ENCODE measurements at regions of chr11 and their contacts with region 1.

Region 1: DNA sequence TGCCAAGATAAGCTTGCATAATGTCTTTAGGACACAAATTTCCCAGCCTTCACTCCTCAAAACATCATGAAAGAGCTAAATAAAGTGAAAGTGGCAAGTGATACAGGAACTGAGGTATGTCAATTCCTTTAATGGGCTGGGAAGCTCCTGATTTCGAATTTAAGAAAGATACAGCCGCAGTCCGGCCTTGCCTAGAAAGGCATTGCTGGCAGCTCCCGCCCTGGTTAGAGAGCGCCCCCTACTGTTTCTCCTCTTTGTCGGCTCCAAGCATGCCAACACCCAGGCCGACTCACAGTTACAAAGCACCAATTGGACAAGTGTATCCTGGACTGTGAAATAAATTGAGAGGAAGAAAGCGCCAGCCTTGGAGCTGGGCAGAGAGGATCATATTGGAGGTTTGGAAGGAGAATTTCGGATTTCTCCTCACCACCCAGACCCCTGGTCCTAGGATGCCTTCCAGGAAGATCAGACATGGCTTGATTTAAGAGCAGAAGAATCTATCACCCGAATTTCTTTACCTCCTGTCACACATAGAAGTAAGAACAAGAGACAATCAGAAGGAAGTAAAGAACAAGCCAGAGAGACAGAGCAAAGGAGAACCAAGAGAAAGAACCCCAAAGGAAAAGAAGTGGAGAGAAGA is 84.0 kb downstream of the FAM76B start:
- DNase-seq: peak; percentile 67 to 91 (median 86)
- ATAC-seq: peak; percentile 98
- H3K4me3 ChIP-seq: no peak overlapping the region
- H3K4me3 Mint-ChIP-seq: no peak overlapping the region
- H3K27ac ChIP-seq: peak overlapping the region; percentile 55
- H3K27ac Mint-ChIP-seq: no peak overlapping the region
- H3K4me1 ChIP-seq: peaks cover 29 to 43% of the 10 kb centered on the region in 2 donors
- H3K4me1 Mint-ChIP-seq: peaks cover 3 to 15% (median 11%) of the 10 kb centered on the region in 7 donors
- H3K27me3 ChIP-seq: no peaks in the 10 kb centered on the region
- H3K27me3 Mint-ChIP-seq: peaks cover 0 to 3% (median 0%) of the 10 kb centered on the region in 5 donors

Region 2: GRCh38 chr11:95296621-95297025 is 409.0 kb before region 1 on chr11:
- CTCF ChIA-PET with region 1: interaction called, 3 read pairs
- POLR2A ChIA-PET with region 1: interaction called, 3 read pairs
- intact Hi-C with region 1: loop called in 1 of 2 experiments (anchors 2 kb)
- DNase-seq: no peak
- ATAC-seq: peak; percentile 78
- H3K4me3 ChIP-seq: no peak overlapping the region
- H3K4me3 Mint-ChIP-seq: peak overlapping the region in 1 of 10 donors; percentile 5
- H3K27ac ChIP-seq: no peak overlapping the region
- H3K27ac Mint-ChIP-seq: no peak overlapping the region
- H3K4me1 ChIP-seq: peaks cover 0 to 27% of the 10 kb centered on the region in 2 donors
- H3K4me1 Mint-ChIP-seq: peaks cover 26 to 47% (median 32%) of the 10 kb centered on the region in 7 donors
- H3K27me3 ChIP-seq: no peaks in the 10 kb centered on the region
- H3K27me3 Mint-ChIP-seq: peaks cover 0 to 4% (median 0%) of the 10 kb centered on the region in 5 donors

Region 3: GRCh38 chr11:95398437-95399112 is 307.0 kb before region 1 on chr11:
- CTCF ChIA-PET with region 1: interaction called, 3 read pairs
- POLR2A ChIA-PET with region 1: no interaction called
- intact Hi-C with region 1: loop called in 1 of 2 experiments (anchors 10 kb)
- DNase-seq: no peak
- ATAC-seq: no peak
- H3K4me3 ChIP-seq: no peak overlapping the region
- H3K4me3 Mint-ChIP-seq: no peak overlapping the region
- H3K27ac ChIP-seq: no peak overlapping the region
- H3K27ac Mint-ChIP-seq: no peak overlapping the region
- H3K4me1 ChIP-seq: no peaks in the 10 kb centered on the region
- H3K4me1 Mint-ChIP-seq: peaks cover 0 to 5% (median 4%) of the 10 kb centered on the region in 7 donors
- H3K27me3 ChIP-seq: no peaks in the 10 kb centered on the region
- H3K27me3 Mint-ChIP-seq: peaks cover 0 to 3% (median 0%) of the 10 kb centered on the region in 5 donors

Region 4: DNA sequence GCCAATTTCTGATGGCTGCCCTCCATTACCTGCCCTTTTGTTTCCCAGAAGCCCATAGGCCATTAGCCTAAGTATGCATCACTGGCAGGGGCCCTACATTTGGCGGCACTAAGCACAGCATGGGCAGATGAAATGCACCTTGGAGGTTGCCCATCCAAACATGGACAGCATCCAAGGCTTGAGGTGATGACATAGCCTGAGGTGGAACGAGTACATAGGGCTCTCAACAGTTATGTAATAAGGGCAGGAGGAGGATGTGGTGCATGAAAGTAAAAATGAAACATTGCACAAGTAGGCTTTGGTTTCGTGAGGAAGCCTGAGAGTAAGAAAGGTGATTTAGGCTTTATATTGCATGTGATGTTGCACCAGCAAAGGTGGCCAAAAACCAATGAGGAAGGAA is 64.1 kb before region 1 on chr11:
- CTCF ChIA-PET with region 1: interaction called, 10 read pairs
- POLR2A ChIA-PET with region 1: interaction called, 5 read pairs
- intact Hi-C with region 1: loop called in 1 of 2 experiments (anchors 1 kb)
- DNase-seq: peak in 8 of 9 donors; percentile 31 to 73 (median 58)
- ATAC-seq: peak; percentile 85
- H3K4me3 ChIP-seq: no peak overlapping the region
- H3K4me3 Mint-ChIP-seq: peak overlapping the region in 9 of 10 donors; percentile 30 to 76 (median 71)
- H3K27ac ChIP-seq: peak overlapping the region; percentile 54
- H3K27ac Mint-ChIP-seq: peak overlapping the region; percentile 83 to 97 (median 92)
- H3K4me1 ChIP-seq: peaks cover 0 to 21% of the 10 kb centered on the region in 2 donors
- H3K4me1 Mint-ChIP-seq: peaks cover 12 to 29% (median 21%) of the 10 kb centered on the region in 7 donors
- H3K27me3 ChIP-seq: no peaks in the 10 kb centered on the region
- H3K27me3 Mint-ChIP-seq: no peaks in the 10 kb centered on the region

Region 5: DNA sequence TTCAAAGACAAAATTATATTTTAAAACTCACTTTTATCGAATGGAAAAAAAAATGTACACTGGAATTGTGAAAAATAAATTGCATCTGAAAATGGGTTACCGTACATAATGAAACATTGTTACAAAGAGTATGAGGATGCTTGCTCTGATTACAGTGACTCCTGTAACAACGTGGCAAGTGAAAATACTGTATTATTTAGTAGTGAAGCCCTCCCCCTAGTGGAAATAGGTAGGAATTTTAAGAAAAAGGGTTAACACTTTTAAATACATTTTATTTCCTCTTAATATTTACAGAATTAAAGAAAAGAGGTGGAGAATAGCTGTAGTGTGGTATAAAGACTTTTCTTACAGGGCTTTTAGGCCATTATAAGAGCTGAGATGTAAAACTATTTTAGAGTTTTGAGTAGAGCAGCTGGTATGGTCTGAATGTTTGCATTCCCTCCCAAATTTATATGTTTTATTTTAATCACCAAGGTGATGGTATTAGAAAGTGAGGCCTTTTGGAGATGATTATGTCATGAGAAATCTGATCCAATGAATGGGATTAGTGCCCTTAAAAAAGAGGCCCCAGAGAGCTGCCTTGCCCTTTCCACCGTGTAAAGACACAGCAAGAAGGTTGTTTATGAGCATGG is 58.8 kb after region 1 on chr11:
- CTCF ChIA-PET with region 1: interaction called, 12 read pairs
- POLR2A ChIA-PET with region 1: no interaction called
- intact Hi-C with region 1: loop called (anchors 1 kb)
- DNase-seq: peak in 7 of 9 donors; percentile 43 to 73 (median 68)
- ATAC-seq: peak; percentile 95
- H3K4me3 ChIP-seq: no peak overlapping the region
- H3K4me3 Mint-ChIP-seq: no peak overlapping the region
- H3K27ac ChIP-seq: no peak overlapping the region
- H3K27ac Mint-ChIP-seq: no peak overlapping the region
- H3K4me1 ChIP-seq: no peaks in the 10 kb centered on the region
- H3K4me1 Mint-ChIP-seq: peaks cover 0 to 9% (median 0%) of the 10 kb centered on the region in 7 donors
- H3K27me3 ChIP-seq: no peaks in the 10 kb centered on the region
- H3K27me3 Mint-ChIP-seq: peaks cover 0 to 19% (median 0%) of the 10 kb centered on the region in 5 donors

Region 6: DNA sequence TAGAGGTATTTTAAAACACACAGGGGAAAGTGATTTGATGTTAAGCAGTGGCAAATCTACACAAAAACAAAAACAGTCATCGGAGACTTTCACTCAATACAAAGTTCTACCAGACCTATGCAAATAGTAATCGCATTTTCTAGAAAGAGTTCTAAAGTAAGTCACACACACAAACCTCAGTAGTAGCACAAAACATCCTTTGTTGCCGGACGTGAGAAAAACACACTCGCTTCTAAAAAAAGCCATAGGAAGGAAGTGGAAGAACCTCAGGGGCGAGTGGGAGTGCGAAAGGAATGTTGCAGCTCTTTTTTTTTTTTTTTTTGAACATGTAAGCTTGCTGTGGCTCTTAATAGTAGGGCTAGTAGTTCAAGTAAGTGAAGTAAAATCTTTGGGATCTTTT is 548.5 kb after region 1 on chr11:
- CTCF ChIA-PET with region 1: no interaction called
- POLR2A ChIA-PET with region 1: no interaction called
- intact Hi-C with region 1: no loop called
- DNase-seq: peak in 7 of 9 donors; percentile 32 to 64 (median 43)
- ATAC-seq: peak; percentile 32
- H3K4me3 ChIP-seq: peak overlapping the region; percentile 40
- H3K4me3 Mint-ChIP-seq: peak overlapping the region; percentile 74 to 87 (median 81)
- H3K27ac ChIP-seq: peak overlapping the region; percentile 77
- H3K27ac Mint-ChIP-seq: peak overlapping the region; percentile 87 to 100 (median 96)
- H3K4me1 ChIP-seq: peaks cover 58 to 78% of the 10 kb centered on the region in 2 donors
- H3K4me1 Mint-ChIP-seq: peaks cover 62 to 99% (median 94%) of the 10 kb centered on the region in 7 donors
- H3K27me3 ChIP-seq: no peaks in the 10 kb centered on the region
- H3K27me3 Mint-ChIP-seq: no peaks in the 10 kb centered on the region

Measured in naive thymus-derived CD4-positive, alpha-beta T cell (primary cell).